B cell (primary cell): ENCODE measurements at regions of chr4 and their contacts with region 1.

Region 1: DNA sequence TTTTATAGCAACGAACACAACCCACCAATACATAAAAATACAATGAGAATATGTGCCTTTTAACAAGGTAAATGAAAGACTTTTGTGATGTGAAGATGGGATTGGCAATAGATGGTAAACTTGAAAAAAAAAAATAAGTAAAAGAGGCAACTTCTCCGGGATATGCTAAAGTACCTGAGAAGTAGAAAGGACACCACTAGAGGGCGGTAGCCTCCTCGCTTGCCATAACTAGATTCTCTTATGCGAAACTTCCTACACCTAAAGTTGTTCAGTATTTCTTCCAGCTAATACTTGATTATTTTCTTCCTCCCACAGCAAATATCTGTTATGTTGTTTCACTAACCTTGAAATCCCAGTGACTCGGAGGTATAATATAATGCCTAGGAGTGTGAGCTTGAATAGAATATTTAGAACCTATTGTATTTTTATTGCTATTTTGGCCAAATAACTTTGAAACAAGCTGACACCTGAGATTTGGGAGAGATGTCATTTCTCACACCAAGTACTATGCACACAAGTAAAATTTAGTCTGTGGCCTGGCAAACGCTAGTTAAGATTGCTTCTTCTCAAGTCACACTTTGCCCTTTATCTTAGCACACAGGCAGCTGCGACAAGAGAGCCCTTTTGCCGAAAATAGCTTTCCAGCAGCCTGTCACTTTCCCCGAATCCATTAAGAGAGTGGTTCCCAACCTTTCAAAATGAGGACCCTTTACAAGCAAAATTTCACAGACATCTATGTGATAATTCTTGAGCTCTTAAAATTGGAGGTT is 44.9 kb upstream of the PDLIM5 start:
- DNase-seq: peak; percentile 75
- ATAC-seq: peak; percentile 62
- H3K4me3 ChIP-seq: no peak overlapping the region
- H3K4me3 Mint-ChIP-seq: no peak overlapping the region
- H3K27ac ChIP-seq: no peak overlapping the region
- H3K27ac Mint-ChIP-seq: no peak overlapping the region
- H3K4me1 ChIP-seq: no peaks in the 10 kb centered on the region
- H3K4me1 Mint-ChIP-seq: no peaks in the 10 kb centered on the region
- H3K27me3 ChIP-seq: no peaks in the 10 kb centered on the region
- H3K27me3 Mint-ChIP-seq: peaks cover 24% of the 10 kb centered on the region
- CTCF ChIP-seq: peak; percentile 98

Region 2: DNA sequence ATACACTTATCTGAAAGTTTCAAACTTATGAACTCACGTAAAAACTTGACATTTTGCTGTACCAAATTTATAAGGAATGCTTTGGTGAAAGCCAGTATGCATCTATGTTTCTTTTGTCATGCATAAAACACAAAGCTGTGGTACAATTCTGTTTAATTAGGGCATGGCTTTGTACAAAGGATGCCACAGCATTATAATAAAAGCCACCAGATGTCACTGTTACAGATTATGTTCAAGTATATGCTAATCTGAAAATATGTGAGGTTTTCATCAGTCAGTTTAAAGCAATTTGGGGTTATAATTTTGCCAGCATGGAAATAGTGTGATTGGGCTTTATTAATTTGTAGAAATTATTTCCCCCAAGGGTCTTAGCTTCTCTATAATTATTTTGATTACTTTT is 509.3 kb before region 1 on chr4:
- CTCF ChIA-PET with region 1: no interaction called
- POLR2A ChIA-PET with region 1: no interaction called
- intact Hi-C with region 1: no loop called
- DNase-seq: no peak
- ATAC-seq: no peak
- H3K4me3 ChIP-seq: no peak overlapping the region
- H3K4me3 Mint-ChIP-seq: no peak overlapping the region
- H3K27ac ChIP-seq: no peak overlapping the region
- H3K27ac Mint-ChIP-seq: no peak overlapping the region
- H3K4me1 ChIP-seq: no peaks in the 10 kb centered on the region
- H3K4me1 Mint-ChIP-seq: no peaks in the 10 kb centered on the region
- H3K27me3 ChIP-seq: no peaks in the 10 kb centered on the region
- H3K27me3 Mint-ChIP-seq: no peaks in the 10 kb centered on the region
- CTCF ChIP-seq: no peak

Region 3: GRCh38 chr4:94395562-94395961 is 11.3 kb before region 1 on chr4:
- CTCF ChIA-PET with region 1: interaction called, 19 read pairs
- POLR2A ChIA-PET with region 1: no interaction called
- intact Hi-C with region 1: no loop called
- DNase-seq: no peak
- ATAC-seq: no peak
- H3K4me3 ChIP-seq: no peak overlapping the region
- H3K4me3 Mint-ChIP-seq: no peak overlapping the region
- H3K27ac ChIP-seq: no peak overlapping the region
- H3K27ac Mint-ChIP-seq: no peak overlapping the region
- H3K4me1 ChIP-seq: no peaks in the 10 kb centered on the region
- H3K4me1 Mint-ChIP-seq: no peaks in the 10 kb centered on the region
- H3K27me3 ChIP-seq: peaks cover 0 to 3% (median 0%) of the 10 kb centered on the region in 4 experiments
- H3K27me3 Mint-ChIP-seq: peaks cover 4% of the 10 kb centered on the region
- CTCF ChIP-seq: no peak

Region 4: DNA sequence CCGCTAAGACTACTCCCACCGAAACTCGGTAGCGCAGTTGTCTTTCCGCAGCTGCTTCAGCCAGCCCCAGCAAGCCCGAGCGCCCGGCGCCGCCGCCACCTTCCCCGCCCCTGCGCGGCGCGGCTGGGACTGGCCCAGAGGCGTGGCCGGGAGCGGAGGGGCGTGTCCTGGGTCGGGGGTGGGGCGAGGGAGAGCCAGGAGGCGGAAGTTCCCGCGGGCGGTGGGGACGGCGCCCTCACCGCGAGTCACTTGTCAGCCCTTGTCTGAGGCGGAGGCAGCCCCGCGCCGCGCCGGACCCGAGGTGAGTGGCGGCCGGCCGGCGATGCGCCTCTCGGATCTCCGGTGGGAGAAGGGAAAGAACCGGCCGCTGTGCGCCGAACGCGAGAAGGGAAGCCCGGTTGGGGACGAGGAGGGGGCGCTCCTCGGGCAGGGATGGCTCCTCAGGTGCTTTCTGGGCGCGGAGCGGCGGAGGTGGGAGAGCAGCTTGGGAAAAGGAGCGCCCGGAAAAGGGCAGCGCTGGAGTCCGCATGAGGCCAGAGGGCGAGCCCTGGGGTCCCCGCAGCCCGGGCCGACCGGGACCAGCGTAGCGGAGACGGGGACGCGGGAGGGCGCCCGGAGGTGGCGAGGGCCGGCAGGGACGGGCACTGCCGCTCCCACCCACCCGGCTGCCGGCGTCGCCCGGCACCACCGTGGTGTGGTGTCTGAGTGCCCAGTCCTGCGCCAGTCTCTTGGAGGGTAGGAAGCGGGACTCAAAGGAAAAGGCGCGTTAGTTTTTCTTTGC is 45.0 kb after region 1 on chr4 and contains the start of gene PDLIM5:
- CTCF ChIA-PET with region 1: interaction called, 11 read pairs
- POLR2A ChIA-PET with region 1: no interaction called
- intact Hi-C with region 1: no loop called
- DNase-seq: peak; percentile 95
- ATAC-seq: peak; percentile 95
- H3K4me3 ChIP-seq: peak within 1 kb of the TSS; percentile 72 to 96 (median 93)
- H3K4me3 Mint-ChIP-seq: peak within 1 kb of the TSS; percentile 89
- H3K27ac ChIP-seq: peak within 1 kb of the TSS; percentile 57 to 86
- H3K27ac Mint-ChIP-seq: peak within 1 kb of the TSS; percentile 84
- H3K4me1 ChIP-seq: peaks cover 16 to 19% of the 10 kb centered on the region in 2 donors
- H3K4me1 Mint-ChIP-seq: peaks cover 19% of the 10 kb centered on the region
- H3K27me3 ChIP-seq: peaks cover 0 to 14% (median 5%) of the 10 kb centered on the region in 4 experiments
- H3K27me3 Mint-ChIP-seq: peaks cover 21% of the 10 kb centered on the region
- CTCF ChIP-seq: no peak
- total RNA-seq, gene PDLIM5: 30.2 and 37.0 TPM in 2 replicates

Region 5: DNA sequence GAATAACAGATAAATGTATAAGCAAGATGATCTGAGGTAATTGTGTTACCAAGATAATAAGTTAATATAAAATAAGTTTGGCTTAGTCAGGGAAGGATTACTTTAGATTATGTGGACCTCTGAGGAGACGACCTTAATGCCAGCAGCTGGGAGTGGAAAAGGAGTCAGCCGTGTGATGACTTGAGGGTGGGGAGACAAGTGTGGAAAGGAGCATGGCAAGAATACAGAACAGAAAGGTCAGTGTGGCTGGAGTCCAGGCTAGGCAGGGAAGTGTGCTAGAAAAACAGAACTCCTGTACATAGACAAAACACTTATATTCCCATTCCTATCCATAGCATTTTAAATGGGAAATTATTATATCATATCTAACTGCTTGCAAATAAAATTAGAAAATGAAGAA is 183.6 kb after region 1 on chr4:
- CTCF ChIA-PET with region 1: interaction called, 14 read pairs
- POLR2A ChIA-PET with region 1: no interaction called
- intact Hi-C with region 1: no loop called
- DNase-seq: no peak
- ATAC-seq: no peak
- H3K4me3 ChIP-seq: no peak overlapping the region
- H3K4me3 Mint-ChIP-seq: no peak overlapping the region
- H3K27ac ChIP-seq: no peak overlapping the region
- H3K27ac Mint-ChIP-seq: no peak overlapping the region
- H3K4me1 ChIP-seq: no peaks in the 10 kb centered on the region
- H3K4me1 Mint-ChIP-seq: no peaks in the 10 kb centered on the region
- H3K27me3 ChIP-seq: no peaks in the 10 kb centered on the region
- H3K27me3 Mint-ChIP-seq: no peaks in the 10 kb centered on the region
- CTCF ChIP-seq: no peak

Region 6: GRCh38 chr4:94595879-94596483 is 189.1 kb after region 1 on chr4:
- CTCF ChIA-PET with region 1: interaction called, 15 read pairs
- POLR2A ChIA-PET with region 1: no interaction called
- intact Hi-C with region 1: loop called (anchors 1 kb)
- DNase-seq: peak; percentile 49
- ATAC-seq: no peak
- H3K4me3 ChIP-seq: no peak overlapping the region
- H3K4me3 Mint-ChIP-seq: no peak overlapping the region
- H3K27ac ChIP-seq: no peak overlapping the region
- H3K27ac Mint-ChIP-seq: no peak overlapping the region
- H3K4me1 ChIP-seq: no peaks in the 10 kb centered on the region
- H3K4me1 Mint-ChIP-seq: no peaks in the 10 kb centered on the region
- H3K27me3 ChIP-seq: no peaks in the 10 kb centered on the region
- H3K27me3 Mint-ChIP-seq: no peaks in the 10 kb centered on the region
- CTCF ChIP-seq: peak; percentile 84